ENCODE measurements at regions of chr5 and their contacts with region 1.

Region 1: DNA sequence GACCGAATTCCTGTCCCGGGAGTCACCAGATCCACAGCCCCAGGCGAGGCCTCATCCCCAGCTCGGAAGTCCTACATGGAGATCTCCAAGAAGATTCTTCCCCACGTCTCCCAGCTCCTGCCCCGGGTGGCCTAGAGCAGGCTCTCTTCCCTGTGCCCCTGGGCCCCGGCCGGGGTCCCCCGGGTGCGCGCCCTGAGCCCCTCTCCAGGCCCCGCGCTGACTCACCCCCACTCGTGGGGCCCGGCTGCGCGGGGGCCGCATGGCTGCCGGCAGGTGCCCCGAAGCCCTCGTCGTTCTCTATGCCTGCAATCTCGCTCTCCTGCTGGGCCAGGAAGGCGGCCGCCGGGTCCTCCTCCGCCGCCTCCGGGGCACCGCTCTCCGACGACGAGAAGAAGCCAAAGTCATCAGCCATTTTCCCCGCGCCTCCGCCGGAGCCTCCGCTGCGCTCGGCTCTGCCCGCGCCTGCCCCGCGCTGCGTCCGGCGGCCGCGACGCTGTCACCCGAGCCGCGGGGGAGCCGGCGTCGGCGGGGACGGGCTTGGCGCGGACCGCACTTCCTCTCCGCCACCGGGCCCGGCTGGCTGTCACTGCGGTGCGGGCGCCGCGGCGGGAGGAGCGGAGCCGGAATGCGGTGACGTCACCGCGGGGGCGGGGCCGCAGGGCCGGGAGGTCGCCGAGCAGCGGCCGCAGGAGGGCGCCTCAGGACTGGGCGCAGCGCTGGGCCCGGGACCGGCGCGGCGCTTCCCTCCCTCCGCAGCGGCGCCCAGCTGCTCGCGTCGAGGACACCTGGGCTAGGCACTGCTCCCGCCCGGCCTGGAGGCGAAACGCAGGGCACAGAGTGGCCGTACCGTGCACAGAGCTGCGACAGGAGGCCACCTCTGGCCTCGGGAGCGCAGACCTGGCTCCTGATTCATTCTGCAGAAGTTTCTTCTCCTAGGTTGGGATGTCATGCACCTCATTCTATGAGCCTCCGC is at the start of gene CLTB:
- DNase-seq: peak; percentile 77
- ATAC-seq: peak; percentile 98
- H3K4me3 ChIP-seq: peak within 1 kb of the TSS; percentile 71 to 75
- H3K27ac ChIP-seq: peak within 1 kb of the TSS; percentile 75
- H3K4me1 ChIP-seq: peaks cover 15 to 36% of the 10 kb centered on the region in 2 experiments
- H3K27me3 ChIP-seq: no peaks in the 10 kb centered on the region
- CTCF ChIP-seq: peak; percentile 32 to 81 (median 48); a peak in 5 of 6 replicates
- POLR2A ChIP-seq: no peak
- RAD21 ChIP-seq: peak; percentile 86
- total RNA-seq, gene CLTB: 58.6 TPM

Region 2: DNA sequence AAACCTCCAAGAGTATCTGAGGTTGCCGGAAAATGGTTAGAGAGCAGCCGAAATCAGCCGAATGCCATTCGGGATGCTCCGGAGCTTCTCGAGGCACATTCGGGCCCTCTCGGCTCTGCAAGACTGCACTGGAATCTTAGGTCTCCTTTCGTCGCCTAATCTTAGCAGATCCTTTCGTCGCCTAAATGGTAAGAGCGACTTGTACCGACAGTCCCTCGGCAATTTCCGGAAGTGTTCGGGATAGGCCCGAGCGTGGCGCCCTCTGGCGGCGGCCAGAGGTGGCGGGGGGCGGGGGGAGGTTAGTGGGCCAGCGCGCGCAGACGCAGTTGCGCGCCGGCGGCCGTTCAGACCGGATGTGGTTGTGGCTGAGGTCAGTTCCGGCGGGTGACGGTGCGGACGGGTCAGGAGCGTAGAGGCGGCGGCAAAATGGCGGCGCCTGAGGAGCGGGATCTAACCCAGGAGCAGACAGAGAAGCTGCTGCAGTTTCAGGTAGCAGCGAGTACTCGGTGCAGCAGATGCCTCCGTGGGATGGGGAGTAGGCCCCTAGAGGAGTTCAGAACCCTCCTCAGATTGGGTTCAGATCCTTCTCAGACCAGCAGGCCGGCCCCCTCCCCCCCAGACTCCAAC is 31.9 kb after region 1 on chr5 and contains the start of gene FAF2:
- CTCF ChIA-PET with region 1: interaction called, 7 read pairs
- POLR2A ChIA-PET with region 1: no interaction called
- RAD21 ChIA-PET with region 1: no interaction called
- intact Hi-C with region 1: loop called (anchors 1 kb)
- DNase-seq: peak; percentile 97
- ATAC-seq: peak; percentile 94
- H3K4me3 ChIP-seq: peak within 1 kb of the TSS; percentile 96
- H3K27ac ChIP-seq: peak within 1 kb of the TSS; percentile 80
- H3K4me1 ChIP-seq: peaks cover 4 to 21% of the 10 kb centered on the region in 2 experiments; a peak in 3 of 4 replicates
- H3K27me3 ChIP-seq: no peaks in the 10 kb centered on the region
- CTCF ChIP-seq: peak; percentile 88 to 98 (median 95)
- POLR2A ChIP-seq: peak; percentile 56
- RAD21 ChIP-seq: peak; percentile 53
- total RNA-seq, gene FAF2: 51.9 TPM

Region 3: DNA sequence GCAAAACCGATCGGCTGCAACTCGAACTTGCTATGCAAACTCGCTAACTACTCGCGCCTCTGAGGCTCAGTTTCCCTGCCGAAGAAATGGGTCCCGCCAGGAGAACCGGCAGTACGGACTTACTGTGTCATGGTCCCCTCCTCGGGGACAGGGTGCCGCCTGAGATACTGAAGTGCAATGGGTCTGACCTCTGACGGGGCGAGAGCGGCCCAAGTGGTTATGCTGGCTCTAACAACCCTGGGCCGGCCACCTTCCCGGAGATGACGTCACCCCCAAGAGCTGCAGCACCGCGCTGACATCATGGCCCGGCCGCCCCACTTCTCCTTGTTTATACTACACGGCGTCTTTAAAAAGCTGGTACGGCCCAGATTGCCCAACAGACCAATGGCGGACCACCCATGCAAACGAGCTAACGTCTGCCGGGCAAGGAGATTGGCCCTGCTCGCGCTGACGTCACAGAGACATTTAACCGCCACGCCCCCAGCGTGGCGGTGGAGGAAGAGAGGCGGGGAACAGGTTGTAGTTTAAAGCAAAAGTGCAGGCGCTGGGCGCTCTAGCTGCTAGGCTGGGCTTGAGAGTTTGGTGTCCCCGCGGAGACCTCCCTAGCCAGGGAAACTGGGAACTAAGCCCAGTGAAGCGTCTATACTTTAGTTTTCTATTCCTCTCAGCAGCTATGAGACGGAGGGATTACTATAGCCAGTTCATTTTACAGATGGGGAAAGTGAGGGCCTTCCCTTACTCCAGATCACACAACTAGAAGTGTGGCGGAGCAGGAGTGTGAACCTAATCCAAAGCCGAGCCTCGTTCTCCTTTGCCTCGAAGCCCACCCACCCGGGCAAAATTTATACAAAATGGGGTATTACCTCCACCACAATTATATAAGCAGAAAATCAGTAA is 121.6 kb after region 1 on chr5:
- CTCF ChIA-PET with region 1: interaction called, 7 read pairs
- POLR2A ChIA-PET with region 1: interaction called, 3 read pairs
- RAD21 ChIA-PET with region 1: interaction called in 1 of 2 experiments, 4 read pairs
- intact Hi-C with region 1: loop called (anchors 2 kb)
- DNase-seq: peak; percentile 99
- ATAC-seq: peak; percentile 80
- H3K4me3 ChIP-seq: peak overlapping the region; percentile 79 to 99
- H3K27ac ChIP-seq: peak overlapping the region; percentile 89
- H3K4me1 ChIP-seq: peaks cover 27 to 47% of the 10 kb centered on the region in 2 experiments
- H3K27me3 ChIP-seq: no peaks in the 10 kb centered on the region
- CTCF ChIP-seq: no peak
- POLR2A ChIP-seq: peak; percentile 27
- RAD21 ChIP-seq: no peak

Region 4: GRCh38 chr5:176559683-176560082 is 143.4 kb after region 1 on chr5:
- CTCF ChIA-PET with region 1: no interaction called
- POLR2A ChIA-PET with region 1: no interaction called
- RAD21 ChIA-PET with region 1: no interaction called
- intact Hi-C with region 1: loop called (anchors 5 kb)
- DNase-seq: peak; percentile 50
- ATAC-seq: peak; percentile 84
- H3K4me3 ChIP-seq: no peak overlapping the region
- H3K27ac ChIP-seq: no peak overlapping the region
- H3K4me1 ChIP-seq: 0 out of 4 replicates have a peak, but pooled peaks cover 2 to 5% of the 10 kb centered on the region in 2 experiments
- H3K27me3 ChIP-seq: no peaks in the 10 kb centered on the region
- CTCF ChIP-seq: peak; percentile 35 to 56 (median 44); a peak in 4 of 6 replicates
- POLR2A ChIP-seq: no peak
- RAD21 ChIP-seq: peak; percentile 73

Region 5: GRCh38 chr5:176573564-176574296 is 157.5 kb after region 1 on chr5:
- CTCF ChIA-PET with region 1: interaction called, 6 read pairs
- POLR2A ChIA-PET with region 1: no interaction called
- RAD21 ChIA-PET with region 1: interaction called in 1 of 2 experiments, 5 read pairs
- intact Hi-C with region 1: loop called (anchors 2 kb)
- DNase-seq: peak; percentile 32
- ATAC-seq: peak; percentile 83
- H3K4me3 ChIP-seq: no peak overlapping the region
- H3K27ac ChIP-seq: no peak overlapping the region
- H3K4me1 ChIP-seq: peaks cover 0 to 18% of the 10 kb centered on the region in 2 experiments; a peak in 2 of 4 replicates
- H3K27me3 ChIP-seq: no peaks in the 10 kb centered on the region
- CTCF ChIP-seq: peak; percentile 81 to 89 (median 88)
- POLR2A ChIP-seq: no peak
- RAD21 ChIP-seq: peak; percentile 90

Region 6: DNA sequence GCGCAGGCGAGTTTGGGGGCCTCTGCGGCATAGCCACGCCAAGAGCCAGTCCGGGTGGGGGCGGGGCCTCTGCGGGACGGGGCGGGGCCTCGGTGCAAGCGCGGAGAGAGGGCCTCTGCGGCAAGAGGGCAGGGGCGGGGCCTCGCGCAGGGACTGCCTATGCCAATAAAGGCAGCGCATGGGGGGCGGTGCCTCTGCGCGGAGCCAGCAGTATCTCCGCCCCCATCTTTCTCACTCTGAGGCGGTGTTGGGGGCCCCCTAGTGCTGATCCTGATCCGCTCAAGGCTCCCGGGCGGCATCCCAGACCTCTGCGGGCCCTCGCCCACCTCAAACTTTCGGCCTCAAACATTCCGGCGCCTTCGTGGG is 202.9 kb after region 1 on chr5:
- CTCF ChIA-PET with region 1: no interaction called
- POLR2A ChIA-PET with region 1: no interaction called
- RAD21 ChIA-PET with region 1: no interaction called
- intact Hi-C with region 1: loop called (anchors 1 kb)
- DNase-seq: peak; percentile 79
- ATAC-seq: peak; percentile 99
- H3K4me3 ChIP-seq: peak overlapping the region; percentile 30 to 37
- H3K27ac ChIP-seq: no peak overlapping the region
- H3K4me1 ChIP-seq: peaks cover 15 to 27% of the 10 kb centered on the region in 2 experiments
- H3K27me3 ChIP-seq: no peaks in the 10 kb centered on the region
- CTCF ChIP-seq: peak; percentile 58 to 81 (median 70)
- POLR2A ChIP-seq: no peak
- RAD21 ChIP-seq: peak; percentile 95